Gastrocnemius medialis (tissue), 4 donors: ENCODE measurements at regions of chr15 and their contacts with region 1.

Region 1: DNA sequence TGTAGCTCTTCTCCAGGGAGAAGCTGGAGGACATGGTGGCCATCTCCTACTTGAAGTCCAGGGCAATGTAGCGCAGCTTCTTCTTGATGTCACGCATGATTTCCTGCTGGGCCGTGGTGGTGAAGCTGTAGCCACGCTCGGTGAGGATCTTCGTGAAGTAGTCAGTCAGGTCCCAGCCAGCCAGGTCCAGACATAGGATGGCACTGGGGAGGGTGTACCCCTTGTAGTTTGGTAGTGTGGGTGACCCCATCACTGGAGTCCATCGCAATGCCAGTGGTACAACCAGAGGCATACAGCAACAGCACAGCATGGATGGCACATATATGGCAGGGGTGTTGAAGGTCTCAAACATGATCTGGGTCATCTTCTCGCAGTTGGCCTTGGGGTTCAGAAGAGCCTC is 7.0 kb upstream of the LPCAT4 start:
- DNase-seq: no peak
- ATAC-seq: no peak
- H3K4me3 ChIP-seq: no peak overlapping the region
- H3K27ac ChIP-seq: no peak overlapping the region
- H3K4me1 ChIP-seq: no peaks in the 10 kb centered on the region
- H3K27me3 ChIP-seq: no peaks in the 10 kb centered on the region
- CTCF ChIP-seq: no peak
- POLR2A ChIP-seq: no peak

Region 2: GRCh38 chr15:34271493-34271892 is 102.5 kb before region 1 on chr15:
- in situ Hi-C with region 1: no loop called
- intact Hi-C with region 1: loop called (anchors 10 kb)
- DNase-seq: peak; percentile 26 to 29
- ATAC-seq: peak; percentile 87 to 98
- H3K4me3 ChIP-seq: no peak overlapping the region
- H3K27ac ChIP-seq: peak overlapping the region in 1 of 4 donors; percentile 23
- H3K4me1 ChIP-seq: no peaks in the 10 kb centered on the region
- H3K27me3 ChIP-seq: no peaks in the 10 kb centered on the region
- CTCF ChIP-seq: no peak
- POLR2A ChIP-seq: no peak